Caco-2 (cell line): ENCODE measurements at regions of chr13 and their contacts with region 1.

Region 1: DNA sequence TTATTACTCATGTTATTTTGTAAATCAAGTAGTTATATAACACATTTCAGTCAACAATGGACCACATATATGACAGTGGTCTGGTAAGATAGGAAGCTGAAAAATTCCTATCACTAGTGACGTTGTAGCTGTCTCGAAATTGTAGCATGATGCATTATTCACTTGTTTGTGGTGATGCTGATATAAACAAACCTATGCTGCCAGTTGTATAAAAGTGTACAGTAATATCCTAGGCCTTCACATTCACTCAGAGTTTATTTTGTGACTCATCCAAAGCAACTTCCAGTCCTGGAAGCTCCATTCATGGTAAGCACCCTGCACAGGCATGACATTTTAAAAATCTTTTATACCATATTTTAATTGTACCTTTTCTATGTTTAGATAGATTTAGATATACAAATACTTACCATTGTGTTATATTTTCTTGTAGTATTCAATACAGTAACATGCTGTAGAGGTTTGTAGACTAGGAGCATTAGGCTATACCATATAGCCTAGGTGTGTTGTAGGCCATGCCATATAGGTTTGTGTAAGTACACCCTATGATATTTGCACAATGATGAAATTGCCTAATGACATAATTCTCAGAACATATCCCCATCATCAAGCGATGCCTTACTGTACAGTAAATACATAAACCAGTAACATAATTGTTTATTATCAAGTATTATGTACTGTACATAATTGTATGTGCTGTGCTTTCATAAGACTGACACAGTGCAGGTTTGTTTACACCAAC is 49.3 kb downstream of the IFT88 start:
- DNase-seq: no peak
- H3K4me3 ChIP-seq: no peak overlapping the region
- H3K4me3 Mint-ChIP-seq: no peak overlapping the region
- H3K27ac Mint-ChIP-seq: no peak overlapping the region
- H3K4me1 ChIP-seq: no peaks in the 10 kb centered on the region
- H3K4me1 Mint-ChIP-seq: no peaks in the 10 kb centered on the region
- H3K27me3 ChIP-seq: no peaks in the 10 kb centered on the region
- H3K27me3 Mint-ChIP-seq: no peaks in the 10 kb centered on the region
- CTCF ChIP-seq: no peak

Region 2: DNA sequence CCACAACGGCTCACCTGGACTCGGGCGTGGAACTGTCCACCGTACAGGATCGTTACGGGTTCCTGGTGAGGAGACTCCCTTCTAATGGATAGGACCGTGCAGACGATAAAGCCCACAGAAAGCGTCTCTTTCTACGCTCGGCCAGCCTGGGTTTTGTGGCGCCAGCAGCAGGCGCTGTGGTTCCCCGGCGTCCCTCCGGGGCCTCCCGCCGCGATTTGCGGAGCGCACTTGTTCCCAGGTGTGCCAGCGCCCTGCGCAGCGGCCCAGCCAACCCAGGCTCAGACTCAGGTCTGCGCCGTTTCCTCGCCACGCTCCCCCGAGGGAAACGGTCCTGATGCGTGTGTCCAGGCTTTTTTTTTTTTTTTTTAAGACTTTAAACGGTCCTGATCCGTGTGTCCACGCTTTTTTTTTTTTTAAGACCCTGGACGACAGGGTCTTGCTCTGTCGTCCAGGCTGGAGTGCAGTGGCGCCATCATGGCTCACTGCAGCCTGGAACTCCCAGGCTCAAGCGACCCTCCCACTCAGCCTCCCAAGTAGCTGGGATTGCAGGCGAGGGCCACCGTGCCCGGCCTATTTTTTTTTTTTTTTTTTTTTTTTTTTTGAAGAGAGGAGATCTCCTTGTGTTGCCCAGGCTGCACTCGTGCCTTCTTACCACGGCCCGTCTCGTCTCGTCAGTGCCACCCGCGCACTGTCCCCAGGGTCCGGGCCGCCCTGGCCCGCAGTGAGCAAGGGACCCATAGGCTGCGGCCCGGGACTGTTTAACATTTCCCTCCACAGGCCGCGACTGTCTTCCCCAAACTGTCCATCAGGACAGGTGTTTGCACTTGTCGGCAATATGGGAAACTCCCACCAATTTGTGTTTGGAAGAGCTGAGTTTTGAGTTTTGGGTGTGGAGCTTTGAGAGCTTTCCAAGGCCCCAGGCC is 479.2 kb before region 1 on chr13:
- CTCF ChIA-PET with region 1: interaction called, 10 read pairs
- POLR2A ChIA-PET with region 1: no interaction called
- intact Hi-C with region 1: no loop called
- DNase-seq: peak; percentile 54 to 76
- H3K4me3 ChIP-seq: peak overlapping the region; percentile 30
- H3K4me3 Mint-ChIP-seq: peak overlapping the region; percentile 54
- H3K27ac Mint-ChIP-seq: no peak overlapping the region
- H3K4me1 ChIP-seq: peaks cover 4% of the 10 kb centered on the region; the same call in 1 of the 2 replicates
- H3K4me1 Mint-ChIP-seq: no peaks in the 10 kb centered on the region
- H3K27me3 ChIP-seq: no peaks in the 10 kb centered on the region
- H3K27me3 Mint-ChIP-seq: no peaks in the 10 kb centered on the region
- CTCF ChIP-seq: peak; percentile 51 to 82

Region 3: DNA sequence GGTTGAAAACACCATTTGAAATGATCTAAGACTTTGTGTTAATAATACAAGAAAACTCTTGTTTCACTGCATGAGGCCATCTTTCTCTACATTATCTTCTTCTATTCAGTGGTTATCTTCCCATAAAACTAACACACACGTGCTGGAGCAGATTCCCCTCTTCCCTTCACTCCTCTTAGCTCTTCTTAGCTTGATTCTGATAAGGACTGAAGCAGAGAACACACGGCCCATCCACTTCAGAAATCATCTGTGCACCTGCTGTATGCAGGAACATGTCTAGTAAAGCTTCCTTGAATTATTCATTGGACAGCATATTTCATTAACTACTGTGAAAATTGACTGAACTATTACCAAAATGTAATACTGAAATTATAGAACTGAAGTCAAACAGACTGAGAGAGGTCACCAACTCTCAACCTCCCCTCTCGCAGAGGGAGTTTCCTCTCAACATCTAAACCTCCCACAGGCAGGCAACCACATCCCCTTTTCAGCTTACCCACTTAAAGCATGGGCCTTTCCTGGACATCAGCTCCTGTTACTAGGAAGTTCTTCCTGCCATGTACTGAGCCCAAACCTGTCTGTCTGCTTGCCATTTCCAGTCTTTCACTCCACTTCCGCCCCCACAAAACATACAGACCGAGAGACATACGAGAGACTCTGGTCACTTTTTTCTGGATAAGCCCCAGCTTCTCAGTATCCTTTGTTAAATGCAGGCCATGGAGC is 204.4 kb before region 1 on chr13:
- CTCF ChIA-PET with region 1: no interaction called
- POLR2A ChIA-PET with region 1: no interaction called
- intact Hi-C with region 1: no loop called
- DNase-seq: no peak
- H3K4me3 ChIP-seq: no peak overlapping the region
- H3K4me3 Mint-ChIP-seq: no peak overlapping the region
- H3K27ac Mint-ChIP-seq: no peak overlapping the region
- H3K4me1 ChIP-seq: no peaks in the 10 kb centered on the region
- H3K4me1 Mint-ChIP-seq: no peaks in the 10 kb centered on the region
- H3K27me3 ChIP-seq: no peaks in the 10 kb centered on the region
- H3K27me3 Mint-ChIP-seq: no peaks in the 10 kb centered on the region
- CTCF ChIP-seq: no peak

Region 4: GRCh38 chr13:20654156-20654555 is 37.9 kb after region 1 on chr13:
- CTCF ChIA-PET with region 1: no interaction called
- POLR2A ChIA-PET with region 1: no interaction called
- intact Hi-C with region 1: no loop called
- DNase-seq: no peak
- H3K4me3 ChIP-seq: no peak overlapping the region
- H3K4me3 Mint-ChIP-seq: no peak overlapping the region
- H3K27ac Mint-ChIP-seq: no peak overlapping the region
- H3K4me1 ChIP-seq: no peaks in the 10 kb centered on the region
- H3K4me1 Mint-ChIP-seq: no peaks in the 10 kb centered on the region
- H3K27me3 ChIP-seq: no peaks in the 10 kb centered on the region
- H3K27me3 Mint-ChIP-seq: no peaks in the 10 kb centered on the region
- CTCF ChIP-seq: no peak